ENCODE measurements at regions of chr14 and their contacts with region 1.

Region 1: DNA sequence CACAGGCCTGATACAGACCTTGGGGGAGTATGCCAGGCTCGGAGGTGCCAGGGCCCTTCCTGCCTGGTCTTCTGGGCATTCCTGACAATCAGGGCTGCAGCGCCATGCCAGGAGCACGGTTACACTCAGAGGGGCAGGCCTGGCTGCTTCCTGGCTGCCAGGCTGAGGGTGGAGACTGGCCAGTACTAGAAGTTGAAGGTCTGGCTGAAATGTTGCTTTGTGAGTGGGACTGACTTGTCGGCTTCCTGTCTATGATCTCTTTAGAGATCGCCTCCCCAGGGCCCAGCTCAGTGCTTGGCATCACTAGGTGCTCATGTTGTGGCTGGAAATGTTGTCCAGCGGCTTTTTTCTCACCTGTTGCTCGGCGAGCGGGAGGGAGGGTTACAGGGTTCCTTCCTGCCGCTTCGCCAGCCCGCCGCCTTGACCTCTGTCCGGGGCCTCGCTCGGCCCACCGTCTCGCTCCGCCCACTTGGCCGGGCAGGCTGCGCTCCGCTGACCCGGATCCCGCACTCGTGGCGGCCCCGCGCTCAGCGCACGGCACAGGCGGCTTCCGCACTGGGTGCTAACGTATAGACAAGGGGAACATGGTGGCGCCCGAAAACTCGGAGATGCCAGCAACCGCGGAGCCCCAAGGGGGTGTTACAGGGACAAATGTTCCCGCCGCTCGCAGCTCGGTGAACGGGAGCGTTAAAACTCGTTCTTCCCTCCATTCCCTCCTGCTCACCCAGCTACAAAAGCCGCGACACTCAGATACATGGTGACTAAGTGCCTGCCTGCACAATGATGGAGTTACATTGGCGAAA is 32.6 kb downstream of the PAPLN start:
- DNase-seq: no peak
- ATAC-seq: peak; percentile 97
- H3K4me3 ChIP-seq: peak overlapping the region; percentile 46; the same call in 1 of the 2 replicates
- H3K27ac ChIP-seq: peak overlapping the region; percentile 3; the same call in 1 of the 2 replicates
- H3K4me1 ChIP-seq: peaks cover 14% of the 10 kb centered on the region
- H3K27me3 ChIP-seq: no peaks in the 10 kb centered on the region
- CTCF ChIP-seq: no peak
- EP300 ChIP-seq: 0 out of 4 replicates have a peak, but pooled peaks of 1 of the 2 experiments have one; percentile 21
- POLR2A ChIP-seq: no peak; the same call in 1 of the 2 replicates
- RAD21 ChIP-seq: no peak

Region 2: DNA sequence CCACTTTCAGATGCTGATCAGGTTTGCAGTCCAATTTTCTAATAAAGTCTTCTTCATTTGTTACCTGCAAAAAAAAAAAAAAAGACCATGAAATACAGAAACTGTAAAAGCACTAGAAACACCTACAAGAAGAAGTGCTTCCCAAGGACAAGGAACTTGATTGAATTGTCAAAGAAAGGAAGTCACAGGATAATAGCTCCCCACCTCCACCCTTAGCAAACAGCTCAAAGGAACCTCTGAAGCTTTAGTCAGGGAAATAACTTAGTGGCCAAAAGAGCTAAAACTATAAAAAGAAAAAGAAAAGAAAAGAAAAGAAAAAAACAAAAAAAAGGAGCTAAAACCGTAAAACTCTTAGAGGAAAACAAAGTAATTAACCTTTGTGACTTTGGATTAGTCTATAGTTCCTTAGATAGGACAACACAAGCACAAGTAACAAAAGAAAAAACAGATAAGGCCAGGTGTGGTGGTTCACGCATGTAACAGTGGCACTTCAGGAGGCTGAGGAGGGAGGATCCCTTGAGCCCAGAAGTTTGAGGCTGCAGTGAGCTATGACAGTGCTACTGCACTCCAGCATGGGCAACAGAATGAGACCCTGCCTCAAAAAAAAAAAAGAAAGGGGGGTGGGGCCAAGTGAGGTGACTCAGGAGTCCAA is 271.6 kb before region 1 on chr14:
- CTCF ChIA-PET with region 1: no interaction called
- POLR2A ChIA-PET with region 1: no interaction called
- RAD21 ChIA-PET with region 1: no interaction called
- SMC1A ChIA-PET with region 1: no interaction called
- in situ Hi-C with region 1: no loop called
- intact Hi-C with region 1: no loop called
- DNase-seq: no peak
- ATAC-seq: no peak
- H3K4me3 ChIP-seq: no peak overlapping the region
- H3K27ac ChIP-seq: no peak overlapping the region
- H3K4me1 ChIP-seq: no peaks in the 10 kb centered on the region
- H3K27me3 ChIP-seq: no peaks in the 10 kb centered on the region
- CTCF ChIP-seq: no peak
- EP300 ChIP-seq: no peak
- POLR2A ChIP-seq: no peak
- RAD21 ChIP-seq: no peak

Region 3: DNA sequence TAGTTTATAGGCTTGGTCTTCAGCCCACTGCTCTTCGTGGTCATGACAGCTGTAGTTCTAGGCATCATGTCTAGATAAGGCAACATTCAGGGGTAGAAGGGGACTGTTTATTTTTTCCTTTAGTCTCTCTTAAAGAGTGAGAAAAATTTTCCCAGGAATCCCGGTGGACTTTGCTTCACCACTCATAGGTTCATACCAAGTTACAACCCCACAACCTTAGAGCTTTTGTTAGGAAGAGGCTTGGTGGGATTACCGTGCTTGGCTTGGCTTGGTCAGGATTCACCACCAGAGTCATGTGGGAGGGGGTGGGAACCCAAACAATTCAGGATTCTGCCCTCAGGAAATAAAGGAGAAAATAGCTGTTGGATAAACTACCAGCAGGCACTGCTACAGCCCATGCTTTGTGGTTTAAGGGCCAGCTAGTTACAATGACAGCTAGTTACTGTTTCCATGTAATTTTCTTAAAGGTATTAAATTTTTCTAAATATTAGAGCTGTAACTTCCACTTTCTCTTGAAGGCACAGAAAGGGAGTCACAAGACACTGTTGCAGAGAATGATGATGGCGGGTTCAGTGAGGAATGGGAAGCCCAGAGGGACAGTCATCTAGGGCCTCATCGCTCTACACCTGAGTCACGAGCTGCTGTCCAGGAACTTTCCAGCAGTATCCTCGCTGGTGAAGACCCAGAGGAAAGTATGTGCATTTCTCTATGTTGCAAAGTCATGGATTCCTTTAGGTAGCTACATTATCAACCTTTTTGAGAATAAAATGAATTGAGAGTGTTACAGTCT is 58.5 kb before region 1 on chr14:
- CTCF ChIA-PET with region 1: no interaction called
- POLR2A ChIA-PET with region 1: no interaction called
- RAD21 ChIA-PET with region 1: no interaction called
- SMC1A ChIA-PET with region 1: no interaction called
- in situ Hi-C with region 1: no loop called
- intact Hi-C with region 1: no loop called
- DNase-seq: no peak
- ATAC-seq: no peak
- H3K4me3 ChIP-seq: no peak overlapping the region
- H3K27ac ChIP-seq: no peak overlapping the region
- H3K4me1 ChIP-seq: no peaks in the 10 kb centered on the region
- H3K27me3 ChIP-seq: no peaks in the 10 kb centered on the region
- CTCF ChIP-seq: no peak
- EP300 ChIP-seq: no peak
- POLR2A ChIP-seq: no peak
- RAD21 ChIP-seq: no peak

Region 4: GRCh38 chr14:73227812-73228781 is 41.8 kb before region 1 on chr14:
- CTCF ChIA-PET with region 1: interaction called, 8 read pairs
- POLR2A ChIA-PET with region 1: interaction called, 3 read pairs
- RAD21 ChIA-PET with region 1: interaction called, 5 read pairs
- SMC1A ChIA-PET with region 1: interaction called, 13 read pairs
- in situ Hi-C with region 1: no loop called
- intact Hi-C with region 1: no loop called
- DNase-seq: no peak
- ATAC-seq: peak; percentile 24
- H3K4me3 ChIP-seq: no peak overlapping the region
- H3K27ac ChIP-seq: no peak overlapping the region
- H3K4me1 ChIP-seq: peaks cover 8% of the 10 kb centered on the region
- H3K27me3 ChIP-seq: no peaks in the 10 kb centered on the region
- CTCF ChIP-seq: no peak
- EP300 ChIP-seq: no peak
- POLR2A ChIP-seq: no peak
- RAD21 ChIP-seq: no peak

Region 5: DNA sequence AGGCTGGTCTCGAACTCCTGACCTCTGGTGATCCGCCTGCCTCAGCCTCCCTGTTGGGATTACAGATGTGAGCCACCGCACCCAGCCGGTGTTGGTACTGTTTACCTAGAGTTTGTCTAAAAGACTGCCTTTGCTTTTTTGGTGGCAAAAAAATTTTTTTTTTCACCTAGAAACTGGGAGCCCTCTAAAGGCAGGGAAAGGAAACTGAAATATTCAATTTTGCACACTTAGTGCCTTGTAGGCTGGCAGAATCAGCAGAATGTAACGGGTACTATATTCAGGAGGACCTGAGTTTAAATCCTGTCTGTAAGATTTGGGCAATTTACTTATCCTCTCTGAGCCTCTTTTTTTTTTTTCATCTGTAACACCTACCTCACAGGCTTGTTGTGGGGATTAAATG is 11.0 kb after region 1 on chr14:
- CTCF ChIA-PET with region 1: interaction called, 9 read pairs
- POLR2A ChIA-PET with region 1: interaction called, 5 read pairs
- RAD21 ChIA-PET with region 1: no interaction called
- SMC1A ChIA-PET with region 1: interaction called, 42 read pairs
- in situ Hi-C with region 1: no loop called
- intact Hi-C with region 1: no loop called
- DNase-seq: no peak
- ATAC-seq: no peak
- H3K4me3 ChIP-seq: no peak overlapping the region
- H3K27ac ChIP-seq: no peak overlapping the region
- H3K4me1 ChIP-seq: no peaks in the 10 kb centered on the region
- H3K27me3 ChIP-seq: no peaks in the 10 kb centered on the region
- CTCF ChIP-seq: 0 out of 6 replicates have a peak, but pooled peaks of 1 of the 3 experiments have one; percentile 2
- EP300 ChIP-seq: no peak
- POLR2A ChIP-seq: no peak
- RAD21 ChIP-seq: no peak